Activated naive CD4-positive, alpha-beta T cell treated with anti-CD3 and anti-CD28 coated beads for 36 hours (primary cell): ENCODE measurements at regions of chr7 and their contacts with region 1.

Region 1: DNA sequence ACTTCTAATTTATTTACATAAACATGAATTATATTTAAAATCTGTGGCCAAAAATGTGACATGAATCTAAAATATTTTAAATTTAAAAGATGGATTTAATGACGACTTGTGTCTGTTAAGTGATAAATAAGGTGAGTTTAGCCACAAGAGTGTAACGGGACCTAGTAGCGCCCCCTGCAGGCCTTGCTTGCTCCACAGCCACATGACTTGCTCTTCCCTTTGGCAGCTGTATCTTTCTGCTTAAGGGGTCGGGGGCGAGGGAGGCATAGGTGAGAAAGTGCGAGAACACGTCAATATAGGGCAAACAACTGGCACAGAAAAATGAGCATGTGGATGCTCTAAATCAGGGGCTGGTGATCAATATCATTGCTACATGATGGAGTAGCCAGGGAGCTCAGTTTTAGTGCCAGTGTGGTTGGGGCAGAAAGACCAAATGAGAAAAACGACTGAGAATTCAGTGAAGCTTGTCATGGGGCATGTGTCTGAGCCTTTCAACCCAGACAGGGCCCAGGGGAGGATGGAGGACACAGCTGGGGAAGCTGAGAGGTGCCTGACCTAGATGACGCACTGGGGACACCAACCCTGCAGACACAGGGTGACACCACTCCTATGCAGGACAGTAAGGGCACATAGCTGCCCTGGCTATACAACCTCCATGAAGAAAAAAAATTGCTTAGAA is 49.8 kb downstream of the PAXIP1 start:
- DNase-seq: peak; percentile 80
- H3K4me3 Mint-ChIP-seq: no peak overlapping the region
- H3K27ac Mint-ChIP-seq: no peak overlapping the region
- H3K4me1 Mint-ChIP-seq: no peaks in the 10 kb centered on the region
- H3K27me3 Mint-ChIP-seq: no peaks in the 10 kb centered on the region

Region 2: DNA sequence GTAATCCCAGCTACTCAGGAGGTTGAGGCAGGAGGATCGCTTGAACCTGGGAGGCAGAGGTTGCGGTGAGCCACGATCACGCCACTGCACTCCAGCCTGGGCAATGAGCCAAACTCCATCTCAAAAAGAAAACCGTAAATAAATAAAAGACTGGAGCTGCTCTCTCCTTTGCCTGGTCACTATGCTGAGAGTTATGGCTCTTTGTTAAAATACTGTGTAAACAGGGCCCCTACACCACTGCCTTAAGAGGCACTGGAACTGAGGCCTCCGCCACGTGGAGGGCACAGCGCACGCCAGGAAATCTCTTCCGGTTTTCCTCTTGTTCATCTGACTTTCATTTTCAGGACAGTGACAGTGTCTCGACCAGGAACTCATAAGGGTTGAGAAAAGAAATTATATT is 73.5 kb before region 1 on chr7:
- CTCF ChIA-PET with region 1: no interaction called
- intact Hi-C with region 1: no loop called
- DNase-seq: no peak
- H3K4me3 Mint-ChIP-seq: no peak overlapping the region
- H3K27ac Mint-ChIP-seq: no peak overlapping the region
- H3K4me1 Mint-ChIP-seq: no peaks in the 10 kb centered on the region
- H3K27me3 Mint-ChIP-seq: peaks cover 11% of the 10 kb centered on the region

Region 3: GRCh38 chr7:154942691-154943090 is 10.5 kb before region 1 on chr7:
- CTCF ChIA-PET with region 1: interaction called, 15 read pairs
- intact Hi-C with region 1: no loop called
- DNase-seq: no peak
- H3K4me3 Mint-ChIP-seq: no peak overlapping the region
- H3K27ac Mint-ChIP-seq: no peak overlapping the region
- H3K4me1 Mint-ChIP-seq: no peaks in the 10 kb centered on the region
- H3K27me3 Mint-ChIP-seq: no peaks in the 10 kb centered on the region

Region 4: GRCh38 chr7:155124477-155125127 is 171.5 kb after region 1 on chr7:
- CTCF ChIA-PET with region 1: no interaction called
- intact Hi-C with region 1: no loop called
- DNase-seq: no peak
- H3K4me3 Mint-ChIP-seq: no peak overlapping the region
- H3K27ac Mint-ChIP-seq: no peak overlapping the region
- H3K4me1 Mint-ChIP-seq: no peaks in the 10 kb centered on the region
- H3K27me3 Mint-ChIP-seq: peaks cover 14% of the 10 kb centered on the region

Region 5: GRCh38 chr7:155477476-155477875 is 524.3 kb after region 1 on chr7:
- CTCF ChIA-PET with region 1: no interaction called
- intact Hi-C with region 1: no loop called
- DNase-seq: peak; percentile 39
- H3K4me3 Mint-ChIP-seq: no peak overlapping the region
- H3K27ac Mint-ChIP-seq: no peak overlapping the region
- H3K4me1 Mint-ChIP-seq: peaks cover 9% of the 10 kb centered on the region
- H3K27me3 Mint-ChIP-seq: peaks cover 71% of the 10 kb centered on the region